ENCODE measurements at regions of chr11 and their contacts with region 1.

Region 1: GRCh38 chr11:12235947-12236743 is 125.8 kb downstream of the MICAL2 start:
- DNase-seq: peak; percentile 57 to 78
- ATAC-seq: peak; percentile 76 to 85 (median 80)
- H3K4me3 ChIP-seq: no peak overlapping the region
- H3K4me3 Mint-ChIP-seq: peak overlapping the region; percentile 81
- H3K27ac ChIP-seq: peak overlapping the region; percentile 77
- H3K27ac Mint-ChIP-seq: peak overlapping the region; percentile 93 to 94
- H3K4me1 ChIP-seq: peaks cover 24% of the 10 kb centered on the region
- H3K4me1 Mint-ChIP-seq: peaks cover 27 to 28% of the 10 kb centered on the region in 2 donors
- H3K27me3 ChIP-seq: no peaks in the 10 kb centered on the region
- H3K27me3 Mint-ChIP-seq: no peaks in the 10 kb centered on the region
- CTCF ChIP-seq: peak; percentile 86

Region 2: GRCh38 chr11:12087075-12088004 is 148.8 kb before region 1 on chr11:
- intact Hi-C with region 1: loop called (anchors 1 kb)
- DNase-seq: peak; percentile 51 to 76
- ATAC-seq: peak; percentile 80 to 93 (median 91)
- H3K4me3 ChIP-seq: no peak overlapping the region
- H3K4me3 Mint-ChIP-seq: peak overlapping the region; percentile 74
- H3K27ac ChIP-seq: peak overlapping the region; percentile 38
- H3K27ac Mint-ChIP-seq: peak overlapping the region; percentile 39 to 58
- H3K4me1 ChIP-seq: peaks cover 69% of the 10 kb centered on the region
- H3K4me1 Mint-ChIP-seq: peaks cover 70 to 80% of the 10 kb centered on the region in 2 donors
- H3K27me3 ChIP-seq: peaks cover 3% of the 10 kb centered on the region
- H3K27me3 Mint-ChIP-seq: peaks cover 16 to 23% of the 10 kb centered on the region in 2 donors
- CTCF ChIP-seq: no peak

Region 3: DNA sequence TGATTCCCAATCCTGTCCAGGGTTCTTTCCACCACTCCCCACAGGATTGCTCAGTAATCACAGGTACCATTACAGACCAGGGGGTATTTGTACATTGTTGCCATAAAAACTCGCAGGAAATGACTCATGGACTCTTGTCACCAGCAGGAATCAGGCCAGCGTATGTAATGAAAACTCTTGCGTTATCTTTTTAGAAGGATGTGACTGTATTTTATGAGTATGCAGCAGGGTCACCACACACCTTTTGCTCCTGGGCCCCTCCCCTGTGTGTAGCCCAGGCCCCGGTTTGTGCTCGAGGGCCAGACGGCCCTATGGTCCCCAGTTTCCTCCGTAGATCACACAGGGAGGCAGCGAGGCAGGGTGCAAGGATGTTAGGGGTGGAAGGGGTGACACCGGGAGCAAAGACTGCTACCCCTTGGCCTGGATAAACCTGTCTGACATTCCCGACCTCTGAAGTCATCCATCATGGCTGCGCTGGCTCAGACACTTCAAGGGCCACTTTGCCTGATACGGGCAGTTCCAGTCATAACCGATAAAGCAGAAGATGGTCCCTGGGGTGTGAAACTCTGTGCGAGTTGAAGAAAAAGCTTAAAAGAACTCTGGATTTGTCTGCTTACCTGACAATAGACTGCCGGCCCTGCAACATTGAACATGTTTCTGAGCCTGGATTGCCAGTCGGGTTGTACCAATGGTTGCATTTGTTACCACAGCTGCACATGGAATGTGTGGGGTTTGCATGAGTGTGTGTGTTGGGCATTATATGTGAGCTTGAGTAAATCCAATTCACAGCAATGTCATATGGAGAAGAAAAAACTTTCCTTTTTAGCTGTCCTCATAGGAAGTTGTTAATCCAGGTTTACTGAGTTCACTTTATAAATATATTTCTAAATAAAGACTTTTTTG is 68.8 kb before region 1 on chr11:
- intact Hi-C with region 1: loop called (anchors 5 kb)
- DNase-seq: no peak
- ATAC-seq: peak in 2 of 3 donors; percentile 21 to 74
- H3K4me3 ChIP-seq: no peak overlapping the region
- H3K4me3 Mint-ChIP-seq: no peak overlapping the region
- H3K27ac ChIP-seq: no peak overlapping the region
- H3K27ac Mint-ChIP-seq: no peak overlapping the region
- H3K4me1 ChIP-seq: peaks cover 6% of the 10 kb centered on the region
- H3K4me1 Mint-ChIP-seq: peaks cover 7 to 25% of the 10 kb centered on the region in 2 donors
- H3K27me3 ChIP-seq: no peaks in the 10 kb centered on the region
- H3K27me3 Mint-ChIP-seq: no peaks in the 10 kb centered on the region
- CTCF ChIP-seq: no peak

Region 4: DNA sequence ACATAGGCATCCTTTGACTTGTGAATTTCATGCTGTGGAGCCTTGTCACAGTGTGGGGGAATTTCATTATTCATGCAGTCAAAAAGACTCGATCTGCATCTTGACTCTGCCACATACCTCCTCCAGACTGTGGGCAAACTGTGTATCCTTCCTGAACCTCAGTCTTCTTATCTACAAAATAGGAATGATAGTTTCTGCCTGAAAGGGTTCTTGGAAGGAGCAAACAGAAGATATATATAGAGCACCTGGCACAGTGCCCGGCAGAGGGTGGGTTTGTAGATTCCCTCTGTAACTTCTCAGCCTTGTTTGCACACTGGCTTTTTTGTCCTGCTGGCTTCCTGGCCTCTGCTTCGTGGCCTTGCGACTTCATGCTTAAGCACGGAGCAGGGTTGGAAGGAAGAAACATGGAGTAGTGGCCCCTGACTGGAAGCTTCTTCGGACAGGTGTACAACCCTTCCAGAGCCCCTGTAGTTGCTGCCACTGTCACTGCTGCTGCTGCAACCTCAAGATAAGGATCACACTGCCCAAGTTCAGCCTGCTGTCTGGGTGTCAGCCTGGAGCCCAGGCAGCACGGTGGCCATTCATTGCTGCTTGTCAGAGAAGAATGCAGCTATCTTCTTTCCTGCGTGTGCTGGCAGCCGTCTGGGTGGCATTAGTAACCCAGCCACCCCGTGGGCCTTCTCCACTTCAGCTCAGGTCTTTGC is 19.3 kb before region 1 on chr11:
- intact Hi-C with region 1: loop called (anchors 1 kb)
- DNase-seq: no peak
- ATAC-seq: peak; percentile 17 to 44 (median 35)
- H3K4me3 ChIP-seq: no peak overlapping the region
- H3K4me3 Mint-ChIP-seq: peak overlapping the region; percentile 70
- H3K27ac ChIP-seq: peak overlapping the region; percentile 28
- H3K27ac Mint-ChIP-seq: peak overlapping the region; percentile 83 to 90
- H3K4me1 ChIP-seq: peaks cover 49% of the 10 kb centered on the region
- H3K4me1 Mint-ChIP-seq: peaks cover 48 to 51% of the 10 kb centered on the region in 2 donors
- H3K27me3 ChIP-seq: no peaks in the 10 kb centered on the region
- H3K27me3 Mint-ChIP-seq: peaks cover 8 to 14% of the 10 kb centered on the region in 2 donors
- CTCF ChIP-seq: no peak

Region 5: DNA sequence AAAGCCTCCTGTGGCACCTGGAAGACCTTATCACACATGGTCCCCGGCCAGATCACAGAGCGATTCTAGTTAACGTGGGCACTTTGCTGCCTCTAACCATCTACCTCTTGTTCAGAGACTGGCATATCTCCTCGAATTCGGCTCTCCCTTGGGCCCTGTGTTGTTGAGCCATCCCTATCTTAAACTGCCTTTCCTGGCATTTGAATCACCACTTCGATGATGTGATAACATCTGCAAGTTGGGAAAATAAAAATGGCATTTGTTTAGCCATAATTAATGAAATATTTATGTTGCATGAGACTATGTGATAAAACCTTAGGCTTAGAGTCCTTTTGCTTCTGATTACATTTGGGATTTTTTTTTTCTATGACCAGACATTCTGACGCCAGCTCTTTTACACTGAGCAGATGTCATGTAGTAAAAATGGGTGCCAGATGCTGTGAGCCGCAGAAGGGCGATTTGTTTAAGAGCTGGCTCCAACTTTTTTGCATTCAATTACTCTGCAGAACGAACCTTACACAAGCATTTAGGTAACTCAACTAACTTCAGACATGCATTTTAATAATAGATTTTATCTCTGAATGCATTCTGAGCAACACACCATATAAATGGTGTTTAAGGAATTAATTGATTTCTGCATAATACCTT is 82.8 kb after region 1 on chr11:
- intact Hi-C with region 1: no loop called
- DNase-seq: no peak
- ATAC-seq: no peak
- H3K4me3 ChIP-seq: no peak overlapping the region
- H3K4me3 Mint-ChIP-seq: no peak overlapping the region
- H3K27ac ChIP-seq: no peak overlapping the region
- H3K27ac Mint-ChIP-seq: no peak overlapping the region
- H3K4me1 ChIP-seq: no peaks in the 10 kb centered on the region
- H3K4me1 Mint-ChIP-seq: no peaks in the 10 kb centered on the region
- H3K27me3 ChIP-seq: no peaks in the 10 kb centered on the region
- H3K27me3 Mint-ChIP-seq: no peaks in the 10 kb centered on the region
- CTCF ChIP-seq: no peak

Region 6: DNA sequence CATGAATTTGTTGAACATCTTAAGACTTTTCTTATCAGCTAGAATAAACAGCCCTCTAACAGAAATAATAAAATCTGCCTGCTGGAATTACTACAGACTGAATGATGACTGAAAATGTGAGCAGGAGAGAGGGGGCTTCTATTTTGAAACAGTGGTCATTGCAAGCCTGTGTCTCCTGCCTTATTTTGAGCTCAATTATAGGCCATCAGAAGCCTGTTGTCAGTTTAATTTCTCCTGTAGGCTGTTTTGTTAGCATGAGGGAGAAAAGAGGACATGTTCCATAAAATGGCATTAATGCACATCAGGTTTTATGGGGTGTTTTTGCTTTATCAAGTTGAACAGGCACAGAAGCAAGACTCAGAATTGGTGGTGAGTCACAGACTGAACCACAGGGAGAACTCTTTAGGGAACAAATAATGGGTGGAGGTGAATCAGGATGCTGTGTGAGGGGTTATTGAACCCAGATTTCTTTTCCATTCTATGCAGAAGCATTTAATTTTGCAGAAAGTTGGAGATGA is 270.3 kb after region 1 on chr11:
- intact Hi-C with region 1: no loop called
- DNase-seq: no peak
- ATAC-seq: no peak
- H3K4me3 ChIP-seq: no peak overlapping the region
- H3K4me3 Mint-ChIP-seq: no peak overlapping the region
- H3K27ac ChIP-seq: no peak overlapping the region
- H3K27ac Mint-ChIP-seq: no peak overlapping the region
- H3K4me1 ChIP-seq: no peaks in the 10 kb centered on the region
- H3K4me1 Mint-ChIP-seq: no peaks in the 10 kb centered on the region
- H3K27me3 ChIP-seq: no peaks in the 10 kb centered on the region
- H3K27me3 Mint-ChIP-seq: peaks cover 2 to 18% of the 10 kb centered on the region in 2 donors
- CTCF ChIP-seq: no peak